ENCODE measurements at regions of chr12 and their contacts with region 1.

Region 1: GRCh38 chr12:57583008-57583831 is 7.8 kb upstream of the PIP4K2C start:
- DNase-seq: peak in 6 of 10 donors; percentile 40 to 91 (median 67)

Region 2: GRCh38 chr12:57340104-57340503 is 243.1 kb before region 1 on chr12:
- intact Hi-C with region 1: no loop called
- DNase-seq: peak in 8 of 10 donors; percentile 25 to 88 (median 42)

Region 3: GRCh38 chr12:57462251-57462911 is 120.8 kb before region 1 on chr12:
- intact Hi-C with region 1: no loop called
- DNase-seq: peak; percentile 65 to 96 (median 79)

Region 4: GRCh38 chr12:57546438-57547383 is 36.5 kb before region 1 on chr12 and contains the start of gene DCTN2:
- intact Hi-C with region 1: no loop called
- DNase-seq: peak; percentile 93 to 99 (median 96)

Region 5: GRCh38 chr12:57621497-57622292 is 38.5 kb after region 1 on chr12:
- intact Hi-C with region 1: loop called (anchors 1 kb)
- DNase-seq: peak in 8 of 10 donors; percentile 59 to 93 (median 74)

Region 6: GRCh38 chr12:57693659-57694458 is 110.6 kb after region 1 on chr12 and contains the start of gene OS9:
- intact Hi-C with region 1: loop called (anchors 5 kb)
- DNase-seq: peak; percentile 89 to 99 (median 97)

Region 7: GRCh38 chr12:57735952-57736740 is 152.9 kb after region 1 on chr12:
- intact Hi-C with region 1: loop called (anchors 5 kb)
- DNase-seq: peak in 8 of 10 donors; percentile 49 to 93 (median 62)